ENCODE measurements at regions of chr18 and their contacts with region 1.

Region 1: DNA sequence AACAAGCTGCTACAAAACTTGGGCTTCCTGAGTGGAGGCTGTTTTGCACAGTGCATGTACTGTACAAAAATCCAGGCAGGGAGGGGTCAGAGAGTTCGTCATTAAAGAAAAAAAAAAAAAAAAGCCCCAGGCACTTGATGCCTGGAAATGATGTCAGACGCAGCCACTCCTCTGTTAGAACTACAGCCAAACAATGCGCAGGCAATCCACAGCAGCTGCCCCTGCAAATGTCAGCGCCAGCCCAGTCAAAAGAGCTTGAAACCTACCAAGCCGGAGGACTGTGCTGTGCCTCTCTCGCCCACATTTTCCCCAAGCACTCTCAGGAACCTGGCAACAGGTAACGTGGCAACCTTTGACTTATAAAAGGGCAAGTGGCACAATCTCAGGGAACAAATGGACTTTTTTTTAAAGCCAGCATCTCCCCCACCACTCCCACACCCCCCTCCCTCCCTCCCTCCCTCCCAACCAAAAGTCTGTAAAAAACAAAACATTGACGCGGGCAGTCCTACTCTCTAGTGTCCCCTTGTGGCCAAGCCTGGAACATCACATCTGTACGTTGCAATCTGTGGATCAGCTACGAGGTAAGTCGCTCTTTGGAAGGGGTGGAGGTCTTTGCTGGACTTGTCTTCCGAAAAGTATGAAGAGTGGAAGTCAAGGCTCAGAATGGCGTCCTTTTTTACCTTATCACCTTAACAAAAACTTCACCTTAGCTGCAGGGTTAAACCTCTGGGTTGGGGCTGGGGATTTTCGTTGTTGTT is 144.1 kb downstream of the TGIF1 start:
- DNase-seq: peak; percentile 83 to 91 (median 85)
- H3K4me3 ChIP-seq: peak overlapping the region; percentile 47 to 71 (median 50)
- H3K4me3 Mint-ChIP-seq: peak overlapping the region; percentile 71 to 84
- H3K27ac ChIP-seq: peak overlapping the region; percentile 93 to 98
- H3K27ac Mint-ChIP-seq: peak overlapping the region; percentile 92 to 99 (median 96)
- H3K4me1 ChIP-seq: peaks cover 52 to 56% of the 10 kb centered on the region in 2 donors
- H3K4me1 Mint-ChIP-seq: peaks cover 46% of the 10 kb centered on the region
- H3K27me3 ChIP-seq: no peaks in the 10 kb centered on the region
- H3K27me3 Mint-ChIP-seq: peaks cover 0 to 5% (median 0%) of the 10 kb centered on the region in 3 donors
- CTCF ChIP-seq: peak; percentile 81

Region 2: DNA sequence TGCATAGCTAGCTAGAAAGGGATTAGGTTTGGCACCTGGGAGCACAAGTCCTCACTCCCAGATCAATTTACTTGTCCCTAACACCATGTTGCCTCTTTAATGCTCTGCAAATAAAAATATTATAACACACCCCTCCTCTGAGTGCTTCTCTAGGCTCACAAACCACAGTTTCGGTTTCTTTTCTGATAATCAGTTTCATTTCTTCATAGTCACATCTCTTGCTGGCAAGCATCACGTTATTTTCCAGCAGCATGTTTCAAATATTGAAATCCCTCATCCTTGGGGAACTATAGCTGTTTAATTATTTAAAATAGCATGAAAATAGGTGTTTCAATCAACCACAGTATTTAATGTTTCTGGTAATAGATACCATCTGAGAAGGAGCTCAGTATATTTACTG is 952.4 kb before region 1 on chr18:
- intact Hi-C with region 1: loop called in 1 of 2 experiments (anchors 10 kb)
- DNase-seq: peak; percentile 29 to 74 (median 60)
- H3K4me3 ChIP-seq: peak overlapping the region in 2 of 3 experiments; percentile 17 to 47
- H3K4me3 Mint-ChIP-seq: peak overlapping the region in 1 of 2 donors; percentile 71
- H3K27ac ChIP-seq: peak overlapping the region in 1 of 2 donors; percentile 47
- H3K27ac Mint-ChIP-seq: peak overlapping the region in 6 of 7 donors; percentile 81 to 94 (median 91)
- H3K4me1 ChIP-seq: peaks cover 93 to 100% of the 10 kb centered on the region in 2 donors
- H3K4me1 Mint-ChIP-seq: peaks cover 47% of the 10 kb centered on the region
- H3K27me3 ChIP-seq: no peaks in the 10 kb centered on the region
- H3K27me3 Mint-ChIP-seq: no peaks in the 10 kb centered on the region
- CTCF ChIP-seq: no peak

Region 3: GRCh38 chr18:2961821-2962220 is 632.3 kb before region 1 on chr18:
- intact Hi-C with region 1: loop called in 1 of 2 experiments (anchors 10 kb)
- DNase-seq: no peak
- H3K4me3 ChIP-seq: peak overlapping the region in 1 of 3 experiments; percentile 1
- H3K4me3 Mint-ChIP-seq: peak overlapping the region in 1 of 2 donors; percentile 30
- H3K27ac ChIP-seq: peak overlapping the region; percentile 16 to 85
- H3K27ac Mint-ChIP-seq: peak overlapping the region in 5 of 7 donors; percentile 83 to 99 (median 98)
- H3K4me1 ChIP-seq: peaks cover 55 to 74% of the 10 kb centered on the region in 2 donors
- H3K4me1 Mint-ChIP-seq: peaks cover 60% of the 10 kb centered on the region
- H3K27me3 ChIP-seq: no peaks in the 10 kb centered on the region
- H3K27me3 Mint-ChIP-seq: peaks cover 0 to 2% (median 0%) of the 10 kb centered on the region in 3 donors
- CTCF ChIP-seq: no peak

Region 4: DNA sequence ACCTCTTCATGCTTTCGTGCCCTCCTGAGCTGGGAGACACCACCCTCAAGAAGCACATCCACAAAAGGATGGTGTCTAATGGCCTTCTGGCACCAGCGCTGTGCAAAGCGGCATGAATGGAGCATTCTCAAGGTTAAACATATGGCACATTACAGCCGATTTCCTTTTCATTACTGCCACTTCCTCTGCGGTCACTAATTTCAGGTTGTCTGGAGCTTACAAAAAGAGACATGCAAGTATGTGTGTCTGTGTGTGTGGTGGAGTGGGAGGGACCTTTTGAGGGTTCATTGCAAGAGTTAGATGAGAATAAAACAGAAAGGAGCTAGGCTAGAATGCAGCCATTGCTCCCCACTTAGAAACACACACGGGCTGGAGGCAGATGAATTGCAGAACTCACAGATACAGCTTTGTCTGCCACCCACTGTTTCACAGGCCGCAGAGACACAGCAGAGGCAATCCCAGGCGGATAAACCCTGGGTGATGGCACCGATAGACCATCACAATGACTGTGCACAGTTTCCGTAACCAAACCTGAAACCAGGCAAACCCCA is 68.1 kb before region 1 on chr18:
- intact Hi-C with region 1: no loop called
- DNase-seq: peak in 2 of 3 donors; percentile 3 to 6
- H3K4me3 ChIP-seq: peak overlapping the region in 1 of 3 experiments; percentile 7
- H3K4me3 Mint-ChIP-seq: peak overlapping the region; percentile 12 to 54
- H3K27ac ChIP-seq: no peak overlapping the region
- H3K27ac Mint-ChIP-seq: peak overlapping the region in 2 of 7 donors; percentile 5 to 39
- H3K4me1 ChIP-seq: peaks cover 8 to 11% of the 10 kb centered on the region in 2 donors
- H3K4me1 Mint-ChIP-seq: peaks cover 16% of the 10 kb centered on the region
- H3K27me3 ChIP-seq: no peaks in the 10 kb centered on the region
- H3K27me3 Mint-ChIP-seq: peaks cover 3 to 4% (median 3%) of the 10 kb centered on the region in 3 donors
- CTCF ChIP-seq: no peak

Region 5: GRCh38 chr18:3604498-3605408 is 10.7 kb after region 1 on chr18:
- intact Hi-C with region 1: loop called in 1 of 2 experiments (anchors 1 kb)
- DNase-seq: peak; percentile 85 to 95 (median 95)
- H3K4me3 ChIP-seq: peak overlapping the region; percentile 23 to 77 (median 49)
- H3K4me3 Mint-ChIP-seq: no peak overlapping the region
- H3K27ac ChIP-seq: peak overlapping the region; percentile 87 to 96
- H3K27ac Mint-ChIP-seq: no peak overlapping the region
- H3K4me1 ChIP-seq: peaks cover 45 to 48% of the 10 kb centered on the region in 2 donors
- H3K4me1 Mint-ChIP-seq: peaks cover 3% of the 10 kb centered on the region
- H3K27me3 ChIP-seq: no peaks in the 10 kb centered on the region
- H3K27me3 Mint-ChIP-seq: no peaks in the 10 kb centered on the region
- CTCF ChIP-seq: no peak

Region 6: DNA sequence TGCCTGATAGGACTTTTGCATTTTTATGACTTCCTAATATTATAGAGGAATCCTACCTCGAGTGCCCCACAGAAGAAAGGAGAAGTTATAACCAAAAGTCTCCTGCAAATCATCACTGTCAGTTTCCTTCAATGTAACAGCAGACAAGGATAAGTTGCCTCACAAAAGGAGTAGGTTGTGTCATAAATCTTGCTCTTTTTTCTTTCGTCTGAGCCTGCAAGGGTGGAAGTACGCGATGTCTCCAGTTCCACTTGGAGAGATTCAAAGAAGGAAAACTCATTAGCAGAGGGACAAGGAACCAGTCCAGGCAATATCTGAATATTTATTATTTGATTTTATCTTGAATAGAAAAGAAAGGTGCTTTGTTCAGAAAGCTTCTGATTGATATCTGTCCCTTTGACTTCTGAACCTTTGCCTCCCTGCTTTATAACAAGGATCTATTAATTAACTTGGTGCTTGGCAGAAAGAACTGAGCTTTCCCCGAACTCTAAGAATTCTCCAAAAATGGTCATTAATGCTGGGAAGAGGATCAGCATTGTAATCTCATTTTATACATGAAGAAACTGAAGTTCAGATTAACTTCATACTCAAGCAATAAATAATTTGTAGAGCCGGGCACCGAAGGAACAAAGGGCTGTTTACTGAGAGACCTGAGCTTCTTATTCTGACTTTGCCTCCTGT is 128.4 kb after region 1 on chr18:
- intact Hi-C with region 1: loop called in 1 of 2 experiments (anchors 10 kb)
- DNase-seq: peak; percentile 77 to 90 (median 87)
- H3K4me3 ChIP-seq: peak overlapping the region in 1 of 3 experiments; percentile 62
- H3K4me3 Mint-ChIP-seq: peak overlapping the region; percentile 48 to 59
- H3K27ac ChIP-seq: peak overlapping the region; percentile 74 to 88
- H3K27ac Mint-ChIP-seq: peak overlapping the region; percentile 88 to 95 (median 92)
- H3K4me1 ChIP-seq: peaks cover 78 to 80% of the 10 kb centered on the region in 2 donors
- H3K4me1 Mint-ChIP-seq: peaks cover 77% of the 10 kb centered on the region
- H3K27me3 ChIP-seq: no peaks in the 10 kb centered on the region
- H3K27me3 Mint-ChIP-seq: peaks cover 0 to 2% (median 0%) of the 10 kb centered on the region in 3 donors
- CTCF ChIP-seq: no peak

Measured in CD14-positive monocyte (primary cell).